ENCODE measurements at regions of chr9 and their contacts with region 1.

Region 1: DNA sequence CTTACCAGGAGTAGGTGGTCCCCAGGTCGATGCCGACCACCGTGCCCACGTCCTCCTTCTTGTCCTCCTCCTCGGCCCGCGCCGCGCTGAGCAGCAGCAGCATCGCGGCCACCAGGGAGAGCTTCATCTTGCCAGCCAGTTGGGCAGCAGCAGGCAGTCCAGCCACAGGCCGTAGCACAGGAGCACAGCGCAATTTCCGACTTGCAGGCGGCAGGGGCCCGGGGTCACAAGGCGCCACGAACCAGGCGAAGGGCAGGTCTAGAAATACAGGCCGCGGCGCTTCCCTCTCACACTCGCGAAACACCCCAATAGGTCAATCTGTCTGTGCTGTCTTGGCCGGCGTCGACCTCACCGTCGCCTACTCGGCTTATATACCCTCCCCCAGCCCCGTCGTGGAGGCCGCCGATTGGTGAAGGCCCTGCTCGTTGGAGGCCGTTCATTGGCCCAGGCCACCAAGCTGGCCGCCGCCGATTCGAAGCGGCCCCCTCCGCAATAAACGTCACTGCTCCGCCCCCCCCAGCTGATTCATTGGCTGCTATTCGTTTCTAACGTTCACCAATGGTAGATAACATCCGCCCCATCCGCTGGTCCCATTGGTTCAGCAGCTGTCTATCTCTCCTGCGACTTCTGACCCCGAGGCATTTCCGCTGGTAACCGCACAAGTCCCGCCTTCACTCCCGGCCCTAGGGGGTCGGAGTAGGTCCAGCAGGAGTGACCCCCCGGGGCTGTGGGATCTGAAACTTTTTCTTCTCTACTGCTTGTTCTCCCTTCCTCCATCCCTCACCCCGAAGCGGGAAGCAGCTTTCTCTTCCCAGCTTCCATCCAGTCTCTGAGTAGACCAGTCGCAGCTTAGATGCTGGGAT is at the start of gene HSPA5:
- DNase-seq: peak; percentile 98 to 100 (median 99)
- ATAC-seq: peak; percentile 90
- H3K4me3 ChIP-seq: peak within 1 kb of the TSS; percentile 95
- H3K4me3 Mint-ChIP-seq: peak within 1 kb of the TSS; percentile 98
- H3K27ac ChIP-seq: peak within 1 kb of the TSS; percentile 96 to 98
- H3K27ac Mint-ChIP-seq: peak within 1 kb of the TSS; percentile 98
- H3K4me1 ChIP-seq: peaks cover 38% of the 10 kb centered on the region
- H3K4me1 Mint-ChIP-seq: peaks cover 55% of the 10 kb centered on the region
- H3K27me3 ChIP-seq: no peaks in the 10 kb centered on the region
- H3K27me3 Mint-ChIP-seq: no peaks in the 10 kb centered on the region
- CTCF ChIP-seq: no peak
- total RNA-seq, gene HSPA5: 276 to 280 TPM

Region 2: GRCh38 chr9:124861342-124862229 is 379.6 kb before region 1 on chr9 and contains the starts of genes ARPC5L and RPL35:
- CTCF ChIA-PET with region 1: no interaction called
- POLR2A ChIA-PET with region 1: interaction called, 9 read pairs
- intact Hi-C with region 1: loop called (anchors 5 to 10 kb)
- DNase-seq: peak; percentile 91 to 98 (median 95)
- ATAC-seq: peak; percentile 92
- H3K4me3 ChIP-seq: peak within 1 kb of the TSS; percentile 89
- H3K4me3 Mint-ChIP-seq: peak within 1 kb of the TSS; percentile 96
- H3K27ac ChIP-seq: peak within 1 kb of the TSS; percentile 89 to 92
- H3K27ac Mint-ChIP-seq: peak within 1 kb of the TSS; percentile 92
- H3K4me1 ChIP-seq: peaks cover 46% of the 10 kb centered on the region
- H3K4me1 Mint-ChIP-seq: peaks cover 38% of the 10 kb centered on the region
- H3K27me3 ChIP-seq: no peaks in the 10 kb centered on the region
- H3K27me3 Mint-ChIP-seq: no peaks in the 10 kb centered on the region
- CTCF ChIP-seq: peak; percentile 23
- total RNA-seq, gene ARPC5L: 36.8 to 37.0 TPM
- total RNA-seq, gene RPL35: 2,088 to 2,142 TPM

Region 3: DNA sequence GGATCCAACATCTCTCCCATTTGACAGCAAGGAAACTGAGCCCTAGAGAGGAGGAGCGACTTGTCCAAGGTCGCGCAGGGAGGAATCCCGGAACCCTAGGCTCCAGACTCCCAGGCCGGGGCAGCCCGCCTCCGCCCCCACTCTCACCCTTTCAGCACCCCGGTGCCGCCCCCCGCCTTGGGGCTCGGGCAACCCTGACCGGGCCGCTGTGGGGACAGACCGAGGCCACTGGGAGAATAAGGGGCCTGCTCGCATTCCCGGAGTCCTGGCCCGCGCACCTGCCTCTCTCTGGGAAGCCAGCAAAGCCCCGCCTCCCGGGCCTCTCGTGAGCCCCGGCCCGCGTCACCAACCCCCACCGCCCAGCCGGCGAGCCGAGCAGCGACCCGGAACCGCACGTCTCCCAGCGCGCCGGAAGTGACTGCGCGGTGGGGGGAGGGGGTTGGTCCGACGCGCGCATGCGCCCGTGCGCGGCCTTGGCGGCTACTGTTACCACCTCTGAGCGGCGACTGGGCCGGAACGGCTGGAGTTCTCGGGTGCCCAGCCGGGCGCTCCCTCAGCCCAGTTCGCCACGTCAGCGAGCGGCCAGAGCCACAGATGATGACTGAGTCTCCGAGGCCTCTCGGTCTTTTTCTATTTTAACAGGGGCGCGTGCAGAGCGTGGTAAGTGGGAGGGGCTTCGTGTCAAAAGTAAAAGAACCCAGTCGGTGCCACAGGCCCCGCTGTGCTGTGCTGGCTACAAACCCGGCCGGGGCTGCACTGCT is 300.4 kb before region 1 on chr9 and contains the start of gene GOLGA1:
- CTCF ChIA-PET with region 1: no interaction called
- POLR2A ChIA-PET with region 1: interaction called, 12 read pairs
- intact Hi-C with region 1: no loop called
- DNase-seq: peak; percentile 86 to 98 (median 91)
- ATAC-seq: peak; percentile 84
- H3K4me3 ChIP-seq: peak within 1 kb of the TSS; percentile 96
- H3K4me3 Mint-ChIP-seq: peak within 1 kb of the TSS; percentile 94
- H3K27ac ChIP-seq: peak within 1 kb of the TSS; percentile 90 to 95
- H3K27ac Mint-ChIP-seq: peak within 1 kb of the TSS; percentile 90
- H3K4me1 ChIP-seq: peaks cover 20% of the 10 kb centered on the region
- H3K4me1 Mint-ChIP-seq: peaks cover 23% of the 10 kb centered on the region
- H3K27me3 ChIP-seq: no peaks in the 10 kb centered on the region
- H3K27me3 Mint-ChIP-seq: no peaks in the 10 kb centered on the region
- CTCF ChIP-seq: no peak
- total RNA-seq, gene GOLGA1: 12.9 to 22.2 TPM

Region 4: GRCh38 chr9:125143375-125144090 is 97.7 kb before region 1 on chr9 and contains the start of gene SCAI:
- CTCF ChIA-PET with region 1: no interaction called
- POLR2A ChIA-PET with region 1: interaction called, 10 read pairs
- intact Hi-C with region 1: no loop called
- DNase-seq: peak; percentile 96 to 99 (median 98)
- ATAC-seq: peak; percentile 98
- H3K4me3 ChIP-seq: peak within 1 kb of the TSS; percentile 54
- H3K4me3 Mint-ChIP-seq: peak within 1 kb of the TSS; percentile 94
- H3K27ac ChIP-seq: no peak within 1 kb of the TSS
- H3K27ac Mint-ChIP-seq: peak within 1 kb of the TSS; percentile 75
- H3K4me1 ChIP-seq: peaks cover 21% of the 10 kb centered on the region
- H3K4me1 Mint-ChIP-seq: peaks cover 38% of the 10 kb centered on the region
- H3K27me3 ChIP-seq: no peaks in the 10 kb centered on the region
- H3K27me3 Mint-ChIP-seq: no peaks in the 10 kb centered on the region
- CTCF ChIP-seq: peak; percentile 97
- total RNA-seq, gene SCAI: 11.6 to 13.4 TPM

Region 5: DNA sequence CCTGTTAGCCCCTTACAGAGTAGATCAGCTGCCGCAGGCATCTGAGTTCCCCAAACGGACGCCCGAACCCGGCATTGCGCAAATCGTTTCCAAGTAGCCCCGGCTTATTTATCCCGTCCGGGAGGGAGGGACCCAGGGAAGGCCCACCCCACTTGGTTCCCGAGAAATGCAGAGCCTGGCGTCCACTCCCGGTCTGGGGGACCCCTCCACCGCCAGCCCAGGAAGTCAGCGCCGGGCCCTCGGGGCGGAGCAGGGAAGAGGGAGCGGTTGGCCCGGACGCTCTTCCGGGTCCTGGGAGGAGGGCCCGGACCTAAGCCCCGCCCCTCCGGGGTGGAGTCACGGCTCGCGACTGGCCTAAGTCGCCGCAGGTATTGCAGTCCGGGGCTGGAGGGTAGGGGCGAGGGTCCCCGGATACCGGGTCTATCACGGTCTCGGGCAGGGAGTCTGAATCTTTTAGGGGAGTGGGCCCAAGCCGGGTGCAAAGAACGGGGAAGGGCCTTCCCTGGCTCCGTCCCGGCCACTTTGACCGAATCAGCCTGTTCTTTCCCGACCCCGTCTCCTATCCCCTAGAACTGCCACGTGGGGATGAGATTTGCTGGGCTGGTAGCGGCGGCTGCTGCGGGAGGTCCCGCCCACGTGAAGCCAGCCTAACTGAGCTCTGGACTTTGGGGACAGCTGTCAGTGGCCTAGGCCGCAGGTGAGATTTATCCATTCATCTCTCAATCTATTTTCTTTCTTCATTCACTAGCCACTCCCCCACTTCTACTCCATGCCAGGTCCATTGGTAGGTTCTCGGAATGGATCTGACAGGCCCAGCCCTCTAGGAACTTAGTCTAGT is 40.8 kb before region 1 on chr9 and contains the start of gene RABEPK:
- CTCF ChIA-PET with region 1: no interaction called
- POLR2A ChIA-PET with region 1: interaction called, 119 read pairs
- intact Hi-C with region 1: loop called (anchors 1 kb)
- DNase-seq: peak; percentile 79 to 94 (median 88)
- ATAC-seq: peak; percentile 94
- H3K4me3 ChIP-seq: peak within 1 kb of the TSS; percentile 92
- H3K4me3 Mint-ChIP-seq: peak within 1 kb of the TSS; percentile 93
- H3K27ac ChIP-seq: peak within 1 kb of the TSS; percentile 63 to 91
- H3K27ac Mint-ChIP-seq: peak within 1 kb of the TSS; percentile 79
- H3K4me1 ChIP-seq: peaks cover 54% of the 10 kb centered on the region
- H3K4me1 Mint-ChIP-seq: peaks cover 63% of the 10 kb centered on the region
- H3K27me3 ChIP-seq: no peaks in the 10 kb centered on the region
- H3K27me3 Mint-ChIP-seq: no peaks in the 10 kb centered on the region
- CTCF ChIP-seq: no peak
- total RNA-seq, gene RABEPK: 6.8 to 8.3 TPM

Region 6: DNA sequence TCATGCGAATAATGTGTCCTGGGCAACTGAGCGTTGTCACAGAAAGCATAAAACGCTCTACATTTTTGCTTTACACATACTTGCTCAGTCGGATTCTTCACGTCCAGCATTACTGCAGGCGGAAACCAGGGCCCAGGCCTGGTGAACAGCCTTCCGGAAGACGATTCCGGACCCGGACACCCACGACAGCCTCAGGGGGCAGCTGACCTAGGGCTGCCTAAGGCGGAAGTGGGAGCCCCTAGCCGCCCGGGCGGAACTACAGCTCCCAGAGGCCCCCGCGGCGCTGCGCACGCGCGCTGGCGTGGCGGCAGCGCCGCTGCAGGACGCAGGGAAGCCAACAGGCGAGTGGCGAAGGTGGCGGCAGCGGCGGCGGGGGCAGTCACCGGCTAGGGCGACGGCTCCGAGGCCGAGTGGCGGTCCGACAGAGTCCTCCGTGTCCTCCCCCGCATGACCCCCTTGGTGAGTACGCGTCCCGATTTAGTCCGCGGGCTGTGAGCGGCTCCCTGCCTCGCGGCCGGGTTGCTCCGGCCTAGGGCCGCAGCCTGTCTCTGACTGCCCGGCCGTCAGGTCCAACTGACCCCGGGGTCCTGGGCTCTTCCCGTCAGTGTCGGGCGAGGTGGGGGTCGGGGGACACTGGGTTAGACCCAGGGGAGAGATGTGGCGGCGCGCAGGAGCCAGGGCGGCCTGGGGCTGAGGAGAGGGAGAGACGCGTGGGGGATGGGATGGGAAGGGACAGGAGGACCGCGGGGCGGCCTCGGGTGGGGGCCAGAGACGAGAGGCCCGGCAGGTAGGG is 20.5 kb after region 1 on chr9 and contains the start of gene GAPVD1:
- CTCF ChIA-PET with region 1: interaction called, 23 read pairs
- POLR2A ChIA-PET with region 1: interaction called, 80 read pairs
- intact Hi-C with region 1: loop called (anchors 1 kb)
- DNase-seq: peak; percentile 75 to 94 (median 84)
- ATAC-seq: peak; percentile 89
- H3K4me3 ChIP-seq: peak within 1 kb of the TSS; percentile 100
- H3K4me3 Mint-ChIP-seq: peak within 1 kb of the TSS; percentile 92
- H3K27ac ChIP-seq: peak within 1 kb of the TSS; percentile 77 to 83
- H3K27ac Mint-ChIP-seq: peak within 1 kb of the TSS; percentile 83
- H3K4me1 ChIP-seq: peaks cover 30% of the 10 kb centered on the region
- H3K4me1 Mint-ChIP-seq: peaks cover 51% of the 10 kb centered on the region
- H3K27me3 ChIP-seq: no peaks in the 10 kb centered on the region
- H3K27me3 Mint-ChIP-seq: no peaks in the 10 kb centered on the region
- CTCF ChIP-seq: no peak
- total RNA-seq, gene GAPVD1: 74.1 to 82.2 TPM

Region 7: GRCh38 chr9:125325831-125326230 is 84.6 kb after region 1 on chr9:
- CTCF ChIA-PET with region 1: no interaction called
- POLR2A ChIA-PET with region 1: no interaction called
- intact Hi-C with region 1: no loop called
- DNase-seq: no peak
- ATAC-seq: no peak
- H3K4me3 ChIP-seq: no peak overlapping the region
- H3K4me3 Mint-ChIP-seq: no peak overlapping the region
- H3K27ac ChIP-seq: no peak overlapping the region
- H3K27ac Mint-ChIP-seq: no peak overlapping the region
- H3K4me1 ChIP-seq: no peaks in the 10 kb centered on the region
- H3K4me1 Mint-ChIP-seq: no peaks in the 10 kb centered on the region
- H3K27me3 ChIP-seq: no peaks in the 10 kb centered on the region
- H3K27me3 Mint-ChIP-seq: no peaks in the 10 kb centered on the region
- CTCF ChIP-seq: no peak

Region 8: DNA sequence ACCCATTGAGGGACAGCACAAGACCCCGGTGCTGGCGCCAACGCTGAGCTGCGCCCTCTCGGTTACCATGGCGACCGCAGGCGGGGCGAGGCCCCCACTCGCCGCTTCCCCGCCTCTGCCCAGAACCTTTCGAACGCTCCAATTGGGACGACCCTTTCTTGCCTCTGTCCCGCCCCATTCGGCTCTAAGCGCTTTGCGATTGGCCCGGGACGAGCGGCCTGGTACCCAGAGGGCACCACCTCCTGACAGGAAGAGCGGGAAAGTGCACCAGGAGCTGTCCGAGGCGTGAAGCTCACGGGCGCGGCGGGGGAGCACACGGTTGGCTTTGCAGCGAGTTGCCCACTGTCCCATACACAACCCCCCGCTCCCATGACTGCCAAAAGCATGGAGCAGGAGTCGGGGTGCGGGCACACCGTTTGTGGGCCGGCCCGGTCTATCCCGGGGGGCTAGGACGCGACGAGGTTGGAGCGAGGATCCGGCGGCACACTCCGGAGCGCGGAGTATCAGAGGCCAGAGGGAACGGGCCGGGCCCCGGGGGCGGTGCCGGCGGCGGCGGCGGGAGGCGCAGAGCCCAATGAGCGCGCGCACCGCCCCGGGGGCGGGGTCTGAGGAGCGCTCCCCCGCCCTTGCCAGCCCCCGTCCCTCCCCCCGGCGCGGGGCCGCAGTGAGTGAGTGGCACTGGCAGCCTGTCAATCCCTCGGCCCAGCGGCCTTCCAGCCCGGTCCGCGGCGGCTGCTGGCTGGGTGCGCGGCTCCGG is 505.0 kb after region 1 on chr9:
- CTCF ChIA-PET with region 1: no interaction called
- POLR2A ChIA-PET with region 1: no interaction called
- intact Hi-C with region 1: loop called in 1 of 2 experiments (anchors 10 kb)
- DNase-seq: peak; percentile 78 to 96 (median 90)
- ATAC-seq: peak; percentile 83
- H3K4me3 ChIP-seq: peak overlapping the region; percentile 90
- H3K4me3 Mint-ChIP-seq: peak overlapping the region; percentile 100
- H3K27ac ChIP-seq: peak overlapping the region; percentile 56 to 63
- H3K27ac Mint-ChIP-seq: peak overlapping the region; percentile 91
- H3K4me1 ChIP-seq: peaks cover 15% of the 10 kb centered on the region
- H3K4me1 Mint-ChIP-seq: peaks cover 37% of the 10 kb centered on the region
- H3K27me3 ChIP-seq: no peaks in the 10 kb centered on the region
- H3K27me3 Mint-ChIP-seq: no peaks in the 10 kb centered on the region
- CTCF ChIP-seq: no peak